CD8-positive, alpha-beta T cell (primary cell): ENCODE measurements at regions of chr2 and their contacts with region 1.

Region 1: GRCh38 chr2:130342533-130343275 is at the start of gene IMP4:
- DNase-seq: peak; percentile 89 to 100 (median 93)
- ATAC-seq: peak; percentile 84
- H3K4me3 ChIP-seq: peak within 1 kb of the TSS; percentile 90 to 98
- H3K4me3 Mint-ChIP-seq: peak within 1 kb of the TSS; percentile 100
- H3K27ac ChIP-seq: peak within 1 kb of the TSS; percentile 94 to 97
- H3K27ac Mint-ChIP-seq: peak within 1 kb of the TSS; percentile 100
- H3K4me1 ChIP-seq: peaks cover 21% of the 10 kb centered on the region
- H3K4me1 Mint-ChIP-seq: peaks cover 35% of the 10 kb centered on the region
- H3K27me3 ChIP-seq: no peaks in the 10 kb centered on the region
- H3K27me3 Mint-ChIP-seq: no peaks in the 10 kb centered on the region
- CTCF ChIP-seq: no peak
- total RNA-seq, gene IMP4: 108 to 120 TPM

Region 2: GRCh38 chr2:130181325-130181879 is 161.3 kb before region 1 on chr2 and contains the start of gene SMPD4:
- CTCF ChIA-PET with region 1: interaction called, 21 read pairs
- POLR2A ChIA-PET with region 1: interaction called, 49 read pairs
- intact Hi-C with region 1: loop called (anchors 1 kb)
- DNase-seq: peak; percentile 96 to 99 (median 98)
- ATAC-seq: peak; percentile 78
- H3K4me3 ChIP-seq: peak within 1 kb of the TSS; percentile 63 to 86
- H3K4me3 Mint-ChIP-seq: peak within 1 kb of the TSS; percentile 92
- H3K27ac ChIP-seq: peak within 1 kb of the TSS; percentile 81 to 89
- H3K27ac Mint-ChIP-seq: peak within 1 kb of the TSS; percentile 95
- H3K4me1 ChIP-seq: peaks cover 22% of the 10 kb centered on the region
- H3K4me1 Mint-ChIP-seq: peaks cover 27% of the 10 kb centered on the region
- H3K27me3 ChIP-seq: no peaks in the 10 kb centered on the region
- H3K27me3 Mint-ChIP-seq: no peaks in the 10 kb centered on the region
- CTCF ChIP-seq: no peak
- total RNA-seq, gene SMPD4: 108 to 114 TPM

Region 3: GRCh38 chr2:130355578-130356431 is 13.1 kb after region 1 on chr2 and contains the start of gene PTPN18:
- CTCF ChIA-PET with region 1: interaction called, 4 read pairs
- POLR2A ChIA-PET with region 1: interaction called, 31 read pairs
- intact Hi-C with region 1: loop called (anchors 1 kb)
- DNase-seq: peak in 8 of 9 experiments; percentile 44 to 74 (median 58)
- ATAC-seq: peak; percentile 87
- H3K4me3 ChIP-seq: peak within 1 kb of the TSS; percentile 61 to 63
- H3K4me3 Mint-ChIP-seq: peak within 1 kb of the TSS; percentile 85
- H3K27ac ChIP-seq: no peak within 1 kb of the TSS
- H3K27ac Mint-ChIP-seq: no peak within 1 kb of the TSS
- H3K4me1 ChIP-seq: peaks cover 10% of the 10 kb centered on the region
- H3K4me1 Mint-ChIP-seq: peaks cover 12% of the 10 kb centered on the region
- H3K27me3 ChIP-seq: no peaks in the 10 kb centered on the region
- H3K27me3 Mint-ChIP-seq: no peaks in the 10 kb centered on the region
- CTCF ChIP-seq: peak; percentile 29
- total RNA-seq, gene PTPN18: 18.1 to 20.6 TPM

Region 4: GRCh38 chr2:130380096-130380934 is 37.6 kb after region 1 on chr2:
- CTCF ChIA-PET with region 1: interaction called, 14 read pairs
- POLR2A ChIA-PET with region 1: interaction called, 15 read pairs
- intact Hi-C with region 1: no loop called
- DNase-seq: no peak
- ATAC-seq: no peak
- H3K4me3 ChIP-seq: no peak overlapping the region
- H3K4me3 Mint-ChIP-seq: no peak overlapping the region
- H3K27ac ChIP-seq: no peak overlapping the region
- H3K27ac Mint-ChIP-seq: no peak overlapping the region
- H3K4me1 ChIP-seq: peaks cover 27% of the 10 kb centered on the region
- H3K4me1 Mint-ChIP-seq: peaks cover 48% of the 10 kb centered on the region
- H3K27me3 ChIP-seq: no peaks in the 10 kb centered on the region
- H3K27me3 Mint-ChIP-seq: no peaks in the 10 kb centered on the region
- CTCF ChIP-seq: no peak

Region 5: GRCh38 chr2:130727286-130728018 is 384.7 kb after region 1 on chr2:
- CTCF ChIA-PET with region 1: no interaction called
- POLR2A ChIA-PET with region 1: interaction called, 8 read pairs
- intact Hi-C with region 1: loop called in 1 of 2 experiments (anchors 5 kb)
- DNase-seq: peak; percentile 81 to 94 (median 89)
- ATAC-seq: peak; percentile 96
- H3K4me3 ChIP-seq: peak overlapping the region; percentile 72 to 81
- H3K4me3 Mint-ChIP-seq: peak overlapping the region; percentile 84
- H3K27ac ChIP-seq: peak overlapping the region; percentile 66 to 85
- H3K27ac Mint-ChIP-seq: peak overlapping the region; percentile 81
- H3K4me1 ChIP-seq: peaks cover 16% of the 10 kb centered on the region
- H3K4me1 Mint-ChIP-seq: peaks cover 15% of the 10 kb centered on the region
- H3K27me3 ChIP-seq: no peaks in the 10 kb centered on the region
- H3K27me3 Mint-ChIP-seq: no peaks in the 10 kb centered on the region
- CTCF ChIP-seq: no peak

Region 6: GRCh38 chr2:131492418-131493198 is 1149.9 kb after region 1 on chr2:
- CTCF ChIA-PET with region 1: interaction called, 3 read pairs
- POLR2A ChIA-PET with region 1: interaction called, 4 read pairs
- intact Hi-C with region 1: loop called in 1 of 2 experiments (anchors 1 kb)
- DNase-seq: peak; percentile 86 to 98 (median 93)
- ATAC-seq: peak; percentile 73
- H3K4me3 ChIP-seq: peak overlapping the region; percentile 86 to 87
- H3K4me3 Mint-ChIP-seq: peak overlapping the region; percentile 95
- H3K27ac ChIP-seq: peak overlapping the region; percentile 95 to 97
- H3K27ac Mint-ChIP-seq: peak overlapping the region; percentile 98
- H3K4me1 ChIP-seq: peaks cover 19% of the 10 kb centered on the region
- H3K4me1 Mint-ChIP-seq: peaks cover 49% of the 10 kb centered on the region
- H3K27me3 ChIP-seq: no peaks in the 10 kb centered on the region
- H3K27me3 Mint-ChIP-seq: no peaks in the 10 kb centered on the region
- CTCF ChIP-seq: peak; percentile 88